Activated CD4-positive, alpha-beta memory T cell treated with anti-CD3 and anti-CD28 coated beads for 36 hours (primary cell): ENCODE measurements at regions of chr2 and their contacts with region 1.

Region 1: DNA sequence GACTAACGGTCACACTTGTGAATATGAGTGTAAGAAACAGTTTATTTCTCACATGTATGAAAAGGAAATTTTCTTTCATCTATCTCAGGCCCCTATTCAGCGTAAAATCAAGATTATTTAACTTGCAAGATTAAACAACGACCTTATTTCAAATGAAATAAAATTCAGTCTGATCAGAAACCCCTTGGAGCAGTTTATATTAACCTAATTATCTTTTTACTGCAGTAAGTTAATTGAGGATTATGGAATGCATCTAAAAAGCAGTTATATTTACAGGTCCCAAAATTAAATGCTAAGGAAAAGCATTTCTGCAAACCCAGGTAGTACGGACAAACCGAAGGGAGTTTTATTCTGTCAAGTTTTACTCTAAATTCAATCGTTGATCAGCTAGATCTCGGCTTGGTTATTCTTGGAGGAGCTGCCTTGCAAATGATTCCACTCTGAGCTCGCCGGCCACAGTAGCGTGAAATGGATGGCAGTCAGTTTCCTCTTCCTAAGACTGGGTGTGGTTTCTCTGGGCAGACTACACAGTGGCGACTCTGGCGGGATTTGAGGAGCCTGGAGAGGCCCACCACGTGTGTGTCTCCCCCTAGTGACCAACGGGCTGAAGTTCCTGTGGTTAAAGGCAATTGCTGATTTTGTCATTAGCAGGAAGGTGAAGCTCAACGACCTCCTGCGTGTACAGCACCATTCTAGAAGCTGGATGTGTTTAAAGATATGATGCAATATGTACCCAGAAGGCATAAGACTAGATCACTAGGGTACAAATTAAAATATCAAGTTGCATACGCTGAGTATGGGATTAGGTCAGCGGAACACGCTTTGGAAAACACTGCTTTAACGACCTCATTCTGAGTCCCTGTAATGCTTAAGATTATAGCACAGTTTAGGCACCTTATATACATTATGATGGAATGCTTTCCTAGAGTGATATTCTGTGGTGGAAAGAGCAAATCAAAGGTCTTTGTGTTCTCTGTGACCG is 36.4 kb downstream of the PRKRA start:
- DNase-seq: peak; percentile 90
- H3K4me3 Mint-ChIP-seq: peak overlapping the region; percentile 74
- H3K27ac Mint-ChIP-seq: peak overlapping the region; percentile 88
- H3K4me1 Mint-ChIP-seq: peaks cover 14% of the 10 kb centered on the region
- H3K27me3 Mint-ChIP-seq: peaks cover 3% of the 10 kb centered on the region

Region 2: GRCh38 chr2:178128836-178129630 is 285.5 kb before region 1 on chr2:
- CTCF ChIA-PET with region 1: interaction called, 8 read pairs
- POLR2A ChIA-PET with region 1: no interaction called
- intact Hi-C with region 1: loop called (anchors 5 kb)
- DNase-seq: no peak
- H3K4me3 Mint-ChIP-seq: no peak overlapping the region
- H3K27ac Mint-ChIP-seq: no peak overlapping the region
- H3K4me1 Mint-ChIP-seq: no peaks in the 10 kb centered on the region
- H3K27me3 Mint-ChIP-seq: no peaks in the 10 kb centered on the region

Region 3: GRCh38 chr2:178306352-178307073 is 108.0 kb before region 1 on chr2:
- CTCF ChIA-PET with region 1: interaction called, 4 read pairs
- POLR2A ChIA-PET with region 1: no interaction called
- intact Hi-C with region 1: loop called (anchors 1 kb)
- DNase-seq: peak; percentile 46
- H3K4me3 Mint-ChIP-seq: no peak overlapping the region
- H3K27ac Mint-ChIP-seq: no peak overlapping the region
- H3K4me1 Mint-ChIP-seq: no peaks in the 10 kb centered on the region
- H3K27me3 Mint-ChIP-seq: peaks cover 14% of the 10 kb centered on the region

Region 4: DNA sequence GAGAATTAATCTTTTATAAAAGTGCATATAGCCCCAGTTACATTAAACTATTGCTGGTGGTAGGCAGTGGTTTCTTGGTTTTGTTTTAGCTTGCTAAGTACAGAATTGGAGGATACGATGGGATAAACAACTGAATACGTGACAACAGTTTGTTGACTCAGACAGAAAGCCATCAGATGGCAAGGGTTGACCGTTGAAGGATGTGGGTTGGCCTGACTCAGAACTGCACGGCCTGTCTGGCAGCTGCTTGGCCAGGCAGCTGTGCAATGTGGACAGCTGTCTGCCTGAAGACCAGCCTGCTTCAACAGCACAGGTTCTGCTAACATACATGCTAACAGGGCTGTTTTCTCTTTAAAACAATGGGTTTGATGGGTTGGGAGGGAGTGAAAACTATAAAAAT is 10.2 kb before region 1 on chr2:
- CTCF ChIA-PET with region 1: interaction called, 116 read pairs
- POLR2A ChIA-PET with region 1: interaction called, 6 read pairs
- intact Hi-C with region 1: loop called (anchors 1 kb)
- DNase-seq: peak; percentile 58
- H3K4me3 Mint-ChIP-seq: no peak overlapping the region
- H3K27ac Mint-ChIP-seq: peak overlapping the region; percentile 56
- H3K4me1 Mint-ChIP-seq: peaks cover 12% of the 10 kb centered on the region
- H3K27me3 Mint-ChIP-seq: peaks cover 2% of the 10 kb centered on the region

Region 5: DNA sequence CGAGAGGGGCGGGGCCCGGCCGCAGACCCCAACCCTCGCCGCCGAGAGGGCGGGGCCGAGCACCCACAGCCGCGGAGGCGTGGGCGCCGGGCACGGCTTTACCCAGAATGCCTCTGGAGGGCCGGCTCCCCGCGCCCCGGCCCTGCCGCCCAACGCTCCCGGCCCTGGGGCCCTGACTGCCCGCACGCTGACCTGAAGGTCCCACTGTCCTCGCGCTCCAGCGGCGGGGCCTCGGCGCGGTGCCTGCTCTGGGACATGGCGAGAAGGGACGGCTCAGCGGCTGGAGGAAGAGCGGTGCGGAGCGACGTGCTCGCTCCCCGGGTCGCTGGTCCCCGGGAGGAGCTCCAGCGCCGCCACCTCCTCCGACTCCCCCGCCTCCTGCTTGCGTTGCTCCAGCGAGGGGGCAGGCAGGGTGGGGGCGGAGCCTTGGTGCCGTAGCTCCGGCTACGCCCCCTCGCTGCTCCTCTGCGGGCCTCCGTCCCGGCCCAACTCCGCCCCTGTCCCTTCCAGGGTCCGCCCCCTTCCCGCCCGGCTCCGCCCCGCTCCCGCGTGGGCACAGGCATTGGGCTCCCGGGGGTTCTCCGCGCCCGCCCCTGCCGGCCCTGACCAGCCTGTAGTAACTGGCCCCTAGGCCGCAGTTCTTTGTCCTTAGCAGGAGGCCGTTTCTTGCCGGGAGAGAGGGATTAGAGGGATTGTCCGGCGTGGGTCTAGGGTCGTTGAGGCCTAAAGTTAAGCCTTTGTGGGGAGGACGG is 36.4 kb after region 1 on chr2 and contains the starts of genes PJVK and PRKRA:
- CTCF ChIA-PET with region 1: interaction called, 43 read pairs
- POLR2A ChIA-PET with region 1: interaction called, 9 read pairs
- intact Hi-C with region 1: loop called (anchors 1 kb)
- DNase-seq: peak; percentile 97
- H3K4me3 Mint-ChIP-seq: peak within 1 kb of the TSS; percentile 89
- H3K27ac Mint-ChIP-seq: peak within 1 kb of the TSS; percentile 95
- H3K4me1 Mint-ChIP-seq: peaks cover 24% of the 10 kb centered on the region
- H3K27me3 Mint-ChIP-seq: no peaks in the 10 kb centered on the region
- total RNA-seq, gene PJVK: 2.3 to 3.0 TPM
- total RNA-seq, gene PRKRA: 56.3 to 60.3 TPM

Region 6: DNA sequence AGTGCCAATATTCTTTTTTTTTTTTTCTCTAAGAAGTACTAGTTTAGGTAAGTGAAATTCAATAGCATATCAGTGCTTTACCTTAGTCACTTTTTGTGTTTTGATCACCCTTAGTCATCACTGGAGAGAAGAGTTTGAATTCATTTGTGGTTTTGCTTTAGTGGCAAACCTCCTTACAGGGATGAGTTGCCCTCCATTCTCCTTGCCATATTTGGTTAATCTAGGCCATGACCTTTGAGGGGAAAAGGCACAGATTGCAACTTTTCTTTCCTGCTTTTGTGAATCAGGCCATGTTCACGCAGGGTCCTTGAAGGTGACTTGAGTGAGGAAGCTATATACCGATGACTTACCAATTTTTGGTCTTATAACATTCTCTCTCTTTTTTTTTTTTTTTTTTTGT is 100.1 kb after region 1 on chr2:
- CTCF ChIA-PET with region 1: no interaction called
- POLR2A ChIA-PET with region 1: no interaction called
- intact Hi-C with region 1: loop called (anchors 2 kb)
- DNase-seq: peak; percentile 70
- H3K4me3 Mint-ChIP-seq: peak overlapping the region; percentile 36
- H3K27ac Mint-ChIP-seq: peak overlapping the region; percentile 87
- H3K4me1 Mint-ChIP-seq: peaks cover 27% of the 10 kb centered on the region
- H3K27me3 Mint-ChIP-seq: no peaks in the 10 kb centered on the region

Region 7: GRCh38 chr2:178542569-178542968 is 128.0 kb after region 1 on chr2:
- CTCF ChIA-PET with region 1: no interaction called
- POLR2A ChIA-PET with region 1: no interaction called
- intact Hi-C with region 1: no loop called
- DNase-seq: no peak
- H3K4me3 Mint-ChIP-seq: no peak overlapping the region
- H3K27ac Mint-ChIP-seq: no peak overlapping the region
- H3K4me1 Mint-ChIP-seq: no peaks in the 10 kb centered on the region
- H3K27me3 Mint-ChIP-seq: no peaks in the 10 kb centered on the region

Region 8: GRCh38 chr2:178700922-178701342 is 286.4 kb after region 1 on chr2:
- CTCF ChIA-PET with region 1: no interaction called
- POLR2A ChIA-PET with region 1: no interaction called
- intact Hi-C with region 1: no loop called
- DNase-seq: no peak
- H3K4me3 Mint-ChIP-seq: no peak overlapping the region
- H3K27ac Mint-ChIP-seq: no peak overlapping the region
- H3K4me1 Mint-ChIP-seq: no peaks in the 10 kb centered on the region
- H3K27me3 Mint-ChIP-seq: peaks cover 3% of the 10 kb centered on the region